Colonic mucosa (tissue), 4 donors: ENCODE measurements at regions of chr1 and their contacts with region 1.

Region 1: DNA sequence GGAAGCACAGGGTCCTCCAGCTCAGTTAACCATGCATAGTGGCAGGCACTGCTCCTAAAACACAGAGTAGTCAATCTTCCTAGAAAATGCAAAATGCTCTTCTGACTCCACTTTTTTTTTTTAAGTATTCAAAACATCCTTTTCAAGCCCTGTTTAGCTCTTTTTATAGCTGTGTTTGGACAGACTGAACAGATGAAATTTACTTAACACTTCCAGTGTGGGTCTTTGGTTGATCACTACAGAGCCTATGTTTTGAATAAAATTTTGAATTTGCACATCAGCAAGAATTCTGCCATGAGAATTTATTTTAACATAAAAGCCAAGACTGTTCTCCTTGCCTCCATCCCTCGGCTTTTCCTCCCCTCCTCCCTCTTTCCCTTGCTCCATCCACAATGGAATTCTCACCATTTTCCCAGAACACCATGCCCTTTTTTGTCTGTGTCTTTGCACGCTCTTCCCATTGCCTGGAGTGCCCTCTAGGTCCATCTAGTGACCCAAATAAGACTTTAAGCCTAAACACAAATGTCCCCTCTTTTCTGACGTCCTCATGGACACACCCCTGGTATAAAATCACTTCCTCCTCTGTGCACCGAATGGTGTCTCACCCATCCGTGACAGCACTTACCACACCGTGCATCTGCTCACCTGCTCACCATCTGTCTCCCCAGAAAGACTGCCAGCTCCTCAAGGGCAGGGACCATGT is 24.0 kb upstream of the CPT2 start:
- DNase-seq: peak; percentile 40
- H3K4me3 ChIP-seq: no peak overlapping the region
- H3K27ac ChIP-seq: no peak overlapping the region
- H3K4me1 ChIP-seq: no peaks in the 10 kb centered on the region
- H3K27me3 ChIP-seq: no peaks in the 10 kb centered on the region
- CTCF ChIP-seq: no peak

Region 2: DNA sequence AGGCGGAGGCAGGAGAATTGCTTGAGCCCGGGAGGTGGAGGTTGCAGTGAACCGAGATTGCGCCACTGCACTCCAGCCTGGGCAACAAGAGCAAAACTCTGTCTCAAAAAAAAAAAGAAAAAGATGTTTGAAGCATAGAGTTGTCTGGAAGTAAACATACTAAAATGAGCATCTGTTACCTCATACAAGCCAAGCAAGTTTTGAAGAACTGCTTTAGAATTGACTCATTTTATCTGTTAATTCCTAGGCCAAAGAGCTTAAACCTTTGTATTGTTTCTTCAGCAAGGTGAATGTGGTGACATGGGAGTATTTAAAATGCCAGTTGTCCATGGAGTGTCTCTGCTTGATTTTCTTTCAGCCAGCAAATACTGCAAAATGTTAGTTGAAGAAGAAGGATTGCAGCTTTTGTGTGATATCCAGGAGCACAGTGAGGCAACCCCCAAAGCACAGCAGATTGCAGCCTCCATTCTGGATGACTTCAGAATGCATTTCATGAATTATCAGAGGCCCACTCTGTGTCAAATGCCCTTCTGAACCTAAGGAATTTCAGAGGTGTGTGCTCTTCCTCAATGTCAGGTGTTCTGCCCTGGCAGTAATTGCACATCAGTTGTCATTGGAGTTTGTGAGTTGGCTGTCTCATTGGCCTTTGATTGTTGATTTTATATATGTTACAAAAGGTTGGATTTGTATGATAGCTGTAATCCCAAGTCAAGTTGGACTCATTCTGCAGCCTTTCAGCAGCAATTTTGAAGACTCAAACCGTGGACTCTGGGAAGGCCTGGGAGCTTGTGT is 280.0 kb before region 1 on chr1:
- intact Hi-C with region 1: no loop called
- DNase-seq: no peak
- H3K4me3 ChIP-seq: no peak overlapping the region
- H3K27ac ChIP-seq: no peak overlapping the region
- H3K4me1 ChIP-seq: no peaks in the 10 kb centered on the region
- H3K27me3 ChIP-seq: no peaks in the 10 kb centered on the region
- CTCF ChIP-seq: no peak

Region 3: GRCh38 chr1:52927212-52928014 is 245.2 kb before region 1 on chr1 and contains the start of gene SCP2:
- intact Hi-C with region 1: loop called (anchors 10 kb)
- DNase-seq: peak; percentile 86
- H3K4me3 ChIP-seq: peak within 1 kb of the TSS; percentile 62
- H3K27ac ChIP-seq: peak within 1 kb of the TSS; percentile 38
- H3K4me1 ChIP-seq: no peaks in the 10 kb centered on the region
- H3K27me3 ChIP-seq: no peaks in the 10 kb centered on the region
- CTCF ChIP-seq: no peak
- total RNA-seq, gene SCP2: 178 to 325 TPM

Region 4: GRCh38 chr1:53014791-53015507 is 157.6 kb before region 1 on chr1:
- intact Hi-C with region 1: loop called (anchors 5 kb)
- DNase-seq: peak; percentile 94
- H3K4me3 ChIP-seq: peak overlapping the region; percentile 53
- H3K27ac ChIP-seq: peak overlapping the region; percentile 44
- H3K4me1 ChIP-seq: peaks cover 9% of the 10 kb centered on the region
- H3K27me3 ChIP-seq: no peaks in the 10 kb centered on the region
- CTCF ChIP-seq: no peak

Region 5: GRCh38 chr1:53220171-53220961 is 47.8 kb after region 1 on chr1 and contains the start of gene CZIB:
- intact Hi-C with region 1: no loop called
- DNase-seq: peak; percentile 95
- H3K4me3 ChIP-seq: peak within 1 kb of the TSS; percentile 68
- H3K27ac ChIP-seq: peak within 1 kb of the TSS; percentile 86
- H3K4me1 ChIP-seq: peaks cover 5% of the 10 kb centered on the region
- H3K27me3 ChIP-seq: no peaks in the 10 kb centered on the region
- CTCF ChIP-seq: no peak
- total RNA-seq, gene CZIB: 34.6 to 43.9 TPM

Region 6: GRCh38 chr1:53238197-53239155 is 65.9 kb after region 1 on chr1 and contains the start of gene MAGOH:
- intact Hi-C with region 1: no loop called
- DNase-seq: peak; percentile 97
- H3K4me3 ChIP-seq: peak within 1 kb of the TSS; percentile 100
- H3K27ac ChIP-seq: peak within 1 kb of the TSS; percentile 55
- H3K4me1 ChIP-seq: peaks cover 3% of the 10 kb centered on the region
- H3K27me3 ChIP-seq: no peaks in the 10 kb centered on the region
- CTCF ChIP-seq: no peak
- total RNA-seq, gene MAGOH: 34.0 to 49.7 TPM